Heart left ventricle (tissue), 16 donors: ENCODE measurements at regions of chr12 and their contacts with region 1.

Region 1: DNA sequence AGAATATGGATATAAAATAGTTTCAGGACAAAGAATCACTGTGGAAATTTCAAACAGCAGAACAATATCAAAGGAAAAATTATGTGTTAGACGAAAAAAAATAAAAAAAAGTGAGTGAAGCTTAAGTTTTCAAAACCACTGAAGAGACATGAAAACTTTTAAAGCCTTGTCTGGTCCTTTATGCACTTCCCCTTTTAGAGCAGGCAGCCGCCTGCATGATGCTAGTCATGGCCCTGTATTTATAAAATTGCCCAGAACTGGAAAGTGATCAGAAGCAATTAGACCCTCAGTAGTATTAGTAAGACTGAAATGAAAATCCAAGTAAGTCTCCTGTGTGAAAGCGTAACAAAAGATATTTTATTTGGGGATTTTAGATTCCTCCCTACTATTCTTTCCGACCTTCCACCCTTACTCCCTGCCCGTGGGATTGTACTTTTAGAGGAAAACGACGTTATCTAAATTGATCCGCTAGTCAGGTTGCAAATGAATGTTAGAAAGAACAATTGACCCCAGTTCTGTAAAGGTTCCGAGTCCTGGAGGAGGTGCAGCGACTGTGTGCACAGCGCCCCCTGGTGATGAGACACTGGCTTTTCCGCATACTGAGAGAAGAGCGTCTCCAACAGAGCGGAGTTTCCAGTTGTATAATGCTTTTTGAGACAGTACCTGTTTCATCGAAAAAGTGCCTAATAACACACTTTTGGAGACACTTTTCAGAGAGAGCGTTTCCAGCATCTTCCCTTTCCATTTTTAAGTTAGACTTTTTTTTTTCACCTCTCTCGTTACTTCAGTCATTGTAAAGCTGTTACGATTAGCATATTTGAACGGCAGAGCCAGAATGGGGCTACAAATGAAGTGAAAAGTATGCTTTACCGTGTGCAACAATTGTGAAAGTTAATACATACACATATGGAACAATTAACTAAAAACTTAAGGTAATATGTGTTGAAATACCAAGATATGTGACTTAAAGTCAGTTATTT is 12.4 kb downstream of the MGST1 start:
- DNase-seq: peak; percentile 20 to 74 (median 42)
- ATAC-seq: peak in 1 of 4 donors; percentile 67
- H3K4me3 ChIP-seq: no peak overlapping the region
- H3K27ac ChIP-seq: no peak overlapping the region
- H3K4me1 ChIP-seq: peaks cover 0 to 7% (median 0%) of the 10 kb centered on the region in 12 donors
- H3K27me3 ChIP-seq: no peaks in the 10 kb centered on the region
- CTCF ChIP-seq: peak in 11 of 12 donors; percentile 19 to 66 (median 56)
- POLR2A ChIP-seq: no peak

Region 2: GRCh38 chr12:16165506-16165905 is 194.3 kb before region 1 on chr12:
- intact Hi-C with region 1: loop called in 6 of 10 experiments (anchors 10 kb)
- DNase-seq: no peak
- ATAC-seq: peak in 1 of 4 donors; percentile 46
- H3K4me3 ChIP-seq: no peak overlapping the region
- H3K27ac ChIP-seq: no peak overlapping the region
- H3K4me1 ChIP-seq: no peaks in the 10 kb centered on the region
- H3K27me3 ChIP-seq: no peaks in the 10 kb centered on the region
- CTCF ChIP-seq: peak in 10 of 12 donors; percentile 15 to 45 (median 28)
- POLR2A ChIP-seq: no peak

Region 3: DNA sequence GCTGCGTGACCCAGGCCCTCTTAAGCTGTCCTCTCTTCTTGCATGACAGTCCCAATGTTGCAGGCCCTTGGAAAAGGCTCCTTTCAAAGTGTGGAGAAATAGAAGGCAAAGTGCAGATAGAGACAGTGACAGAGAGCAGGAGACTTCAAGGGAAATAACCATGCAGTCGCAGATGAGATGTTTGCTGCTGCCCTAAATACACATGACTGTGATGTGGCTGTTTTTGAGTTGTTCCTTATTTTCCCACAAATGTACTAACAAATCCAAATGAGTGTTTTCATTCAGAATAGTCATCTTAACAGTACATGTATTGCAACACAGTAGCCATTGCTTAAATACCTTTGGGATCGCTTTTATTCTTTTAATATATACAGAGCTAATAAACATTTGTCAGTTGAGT is 184.0 kb before region 1 on chr12:
- intact Hi-C with region 1: loop called in 1 of 10 experiments (anchors 10 kb)
- DNase-seq: no peak
- ATAC-seq: peak in 2 of 4 donors; percentile 18 to 64
- H3K4me3 ChIP-seq: no peak overlapping the region
- H3K27ac ChIP-seq: no peak overlapping the region
- H3K4me1 ChIP-seq: no peaks in the 10 kb centered on the region
- H3K27me3 ChIP-seq: no peaks in the 10 kb centered on the region
- CTCF ChIP-seq: no peak
- POLR2A ChIP-seq: no peak